GM12878 (cell line): ENCODE measurements at regions of chr6 and their contacts with region 1.

Region 1: GRCh38 chr6:130293800-130294199 is 71.0 kb upstream of the SAMD3 start:
- DNase-seq: peak; percentile 8
- ATAC-seq: peak; percentile 98
- H3K4me3 ChIP-seq: no peak overlapping the region
- H3K27ac ChIP-seq: no peak overlapping the region
- H3K4me1 ChIP-seq: no peaks in the 10 kb centered on the region
- H3K27me3 ChIP-seq: no peaks in the 10 kb centered on the region
- CTCF ChIP-seq: peak; percentile 47 to 65 (median 64)
- EP300 ChIP-seq: no peak
- POLR2A ChIP-seq: no peak
- RAD21 ChIP-seq: peak; percentile 61

Region 2: GRCh38 chr6:130148181-130148580 is 145.6 kb before region 1 on chr6:
- CTCF ChIA-PET with region 1: no interaction called
- POLR2A ChIA-PET with region 1: no interaction called
- RAD21 ChIA-PET with region 1: no interaction called
- SMC1A ChIA-PET with region 1: interaction called, 3 read pairs
- in situ Hi-C with region 1: no loop called
- intact Hi-C with region 1: loop called (anchors 5 kb)
- DNase-seq: no peak
- ATAC-seq: peak; percentile 91
- H3K4me3 ChIP-seq: no peak overlapping the region
- H3K27ac ChIP-seq: no peak overlapping the region
- H3K4me1 ChIP-seq: no peaks in the 10 kb centered on the region
- H3K27me3 ChIP-seq: no peaks in the 10 kb centered on the region
- CTCF ChIP-seq: peak; percentile 25 to 52 (median 46)
- EP300 ChIP-seq: no peak
- POLR2A ChIP-seq: no peak
- RAD21 ChIP-seq: 0 out of 2 replicates have a peak, but pooled peaks have one; percentile 17

Region 3: DNA sequence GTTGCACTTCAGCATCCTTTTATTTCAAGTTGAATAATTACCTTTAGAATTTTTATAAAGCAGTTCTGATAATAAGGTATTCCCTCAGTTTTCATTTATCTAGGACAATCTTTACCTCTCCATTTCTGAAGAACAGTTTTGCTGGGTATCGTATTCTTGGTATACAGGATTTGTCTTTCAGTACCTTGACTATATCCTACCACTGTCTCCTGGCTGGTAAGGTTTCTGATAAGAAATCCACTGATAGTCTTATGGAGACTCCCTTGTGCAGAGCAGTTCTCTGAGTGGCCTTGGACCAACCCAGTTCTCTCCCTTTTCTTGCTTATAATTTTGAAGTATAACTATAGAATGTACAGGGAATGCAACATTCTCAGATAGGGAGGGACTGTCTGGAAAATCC is 19.8 kb before region 1 on chr6:
- CTCF ChIA-PET with region 1: no interaction called
- POLR2A ChIA-PET with region 1: no interaction called
- RAD21 ChIA-PET with region 1: no interaction called
- SMC1A ChIA-PET with region 1: no interaction called
- in situ Hi-C with region 1: no loop called
- intact Hi-C with region 1: no loop called
- DNase-seq: no peak
- ATAC-seq: no peak
- H3K4me3 ChIP-seq: no peak overlapping the region
- H3K27ac ChIP-seq: no peak overlapping the region
- H3K4me1 ChIP-seq: 0 out of 2 replicates have a peak, but pooled peaks cover 6% of the 10 kb centered on the region
- H3K27me3 ChIP-seq: no peaks in the 10 kb centered on the region
- CTCF ChIP-seq: no peak
- EP300 ChIP-seq: no peak
- POLR2A ChIP-seq: no peak
- RAD21 ChIP-seq: no peak

Region 4: GRCh38 chr6:130307752-130308361 is 14.1 kb after region 1 on chr6:
- CTCF ChIA-PET with region 1: interaction called, 27 read pairs
- POLR2A ChIA-PET with region 1: no interaction called
- RAD21 ChIA-PET with region 1: interaction called, 3 read pairs
- SMC1A ChIA-PET with region 1: interaction called, 4 read pairs
- in situ Hi-C with region 1: no loop called
- intact Hi-C with region 1: no loop called
- DNase-seq: no peak
- ATAC-seq: no peak
- H3K4me3 ChIP-seq: no peak overlapping the region
- H3K27ac ChIP-seq: no peak overlapping the region
- H3K4me1 ChIP-seq: no peaks in the 10 kb centered on the region; the same call in 1 of the 2 replicates
- H3K27me3 ChIP-seq: no peaks in the 10 kb centered on the region
- CTCF ChIP-seq: no peak
- EP300 ChIP-seq: no peak
- POLR2A ChIP-seq: no peak
- RAD21 ChIP-seq: no peak

Region 5: GRCh38 chr6:130760006-130760405 is 466.2 kb after region 1 on chr6:
- CTCF ChIA-PET with region 1: interaction called, 6 read pairs
- POLR2A ChIA-PET with region 1: no interaction called
- RAD21 ChIA-PET with region 1: no interaction called
- SMC1A ChIA-PET with region 1: no interaction called
- in situ Hi-C with region 1: no loop called
- intact Hi-C with region 1: loop called (anchors 5 kb)
- DNase-seq: no peak
- ATAC-seq: peak; percentile 55; the same call in 2 of the 3 replicates
- H3K4me3 ChIP-seq: no peak overlapping the region
- H3K27ac ChIP-seq: no peak overlapping the region
- H3K4me1 ChIP-seq: no peaks in the 10 kb centered on the region
- H3K27me3 ChIP-seq: no peaks in the 10 kb centered on the region; a peak in 1 of 4 replicates
- CTCF ChIP-seq: peak; percentile 46 to 53 (median 49); a peak in 5 of 6 replicates
- EP300 ChIP-seq: no peak
- POLR2A ChIP-seq: no peak
- RAD21 ChIP-seq: peak; percentile 73

Region 6: DNA sequence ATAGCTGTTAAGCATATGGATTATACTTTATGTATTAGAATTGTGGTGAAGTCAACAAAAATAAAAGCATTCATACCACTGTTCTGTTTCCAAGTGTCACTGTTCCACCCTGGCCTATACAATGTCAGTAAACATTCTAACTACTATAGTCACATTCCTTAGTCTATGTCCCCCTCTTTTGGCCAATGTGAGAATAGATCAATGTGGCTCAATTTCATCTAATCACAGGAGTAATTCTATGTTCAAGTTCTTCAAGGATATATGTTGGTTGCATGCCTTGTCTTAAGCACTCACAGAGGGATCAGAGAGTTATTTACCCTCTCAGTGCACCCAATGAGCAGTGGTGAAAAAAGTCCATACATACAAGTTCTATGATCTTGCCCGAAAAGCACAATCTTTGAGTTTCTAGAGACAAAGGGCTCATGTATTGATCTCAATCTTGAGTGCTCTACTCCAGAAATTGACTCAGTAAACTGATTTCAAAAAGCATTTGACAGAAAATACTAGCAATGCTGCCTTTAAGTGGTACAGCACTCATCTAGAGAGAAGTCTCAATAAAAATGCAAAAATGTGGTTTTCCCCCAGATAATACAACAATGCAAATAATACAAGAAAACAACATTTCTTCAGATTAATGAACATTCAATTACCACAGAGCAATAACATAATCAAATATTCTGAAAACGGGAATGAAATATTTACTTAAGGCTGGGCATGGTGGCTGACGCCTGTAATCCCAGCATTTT is 549.9 kb after region 1 on chr6:
- CTCF ChIA-PET with region 1: interaction called, 12 read pairs
- POLR2A ChIA-PET with region 1: no interaction called
- RAD21 ChIA-PET with region 1: interaction called, 4 read pairs
- SMC1A ChIA-PET with region 1: interaction called, 3 read pairs
- in situ Hi-C with region 1: no loop called
- intact Hi-C with region 1: no loop called
- DNase-seq: peak; percentile 9
- ATAC-seq: peak; percentile 86
- H3K4me3 ChIP-seq: no peak overlapping the region
- H3K27ac ChIP-seq: no peak overlapping the region
- H3K4me1 ChIP-seq: no peaks in the 10 kb centered on the region
- H3K27me3 ChIP-seq: no peaks in the 10 kb centered on the region
- CTCF ChIP-seq: peak; percentile 49 to 75 (median 62); a peak in 5 of 6 replicates
- EP300 ChIP-seq: no peak
- POLR2A ChIP-seq: no peak
- RAD21 ChIP-seq: peak; percentile 84